Psoas muscle (tissue), 8 donors: ENCODE measurements at regions of chr9 and their contacts with region 1.

Region 1: GRCh38 chr9:130490981-130491380 is 46.2 kb downstream of the ASS1 start:
- DNase-seq: no peak
- ATAC-seq: no peak
- H3K4me3 ChIP-seq: no peak overlapping the region
- H3K27ac ChIP-seq: no peak overlapping the region
- H3K4me1 ChIP-seq: no peaks in the 10 kb centered on the region
- H3K27me3 ChIP-seq: peaks cover 0 to 1% (median 0%) of the 10 kb centered on the region in 3 donors
- CTCF ChIP-seq: no peak

Region 2: DNA sequence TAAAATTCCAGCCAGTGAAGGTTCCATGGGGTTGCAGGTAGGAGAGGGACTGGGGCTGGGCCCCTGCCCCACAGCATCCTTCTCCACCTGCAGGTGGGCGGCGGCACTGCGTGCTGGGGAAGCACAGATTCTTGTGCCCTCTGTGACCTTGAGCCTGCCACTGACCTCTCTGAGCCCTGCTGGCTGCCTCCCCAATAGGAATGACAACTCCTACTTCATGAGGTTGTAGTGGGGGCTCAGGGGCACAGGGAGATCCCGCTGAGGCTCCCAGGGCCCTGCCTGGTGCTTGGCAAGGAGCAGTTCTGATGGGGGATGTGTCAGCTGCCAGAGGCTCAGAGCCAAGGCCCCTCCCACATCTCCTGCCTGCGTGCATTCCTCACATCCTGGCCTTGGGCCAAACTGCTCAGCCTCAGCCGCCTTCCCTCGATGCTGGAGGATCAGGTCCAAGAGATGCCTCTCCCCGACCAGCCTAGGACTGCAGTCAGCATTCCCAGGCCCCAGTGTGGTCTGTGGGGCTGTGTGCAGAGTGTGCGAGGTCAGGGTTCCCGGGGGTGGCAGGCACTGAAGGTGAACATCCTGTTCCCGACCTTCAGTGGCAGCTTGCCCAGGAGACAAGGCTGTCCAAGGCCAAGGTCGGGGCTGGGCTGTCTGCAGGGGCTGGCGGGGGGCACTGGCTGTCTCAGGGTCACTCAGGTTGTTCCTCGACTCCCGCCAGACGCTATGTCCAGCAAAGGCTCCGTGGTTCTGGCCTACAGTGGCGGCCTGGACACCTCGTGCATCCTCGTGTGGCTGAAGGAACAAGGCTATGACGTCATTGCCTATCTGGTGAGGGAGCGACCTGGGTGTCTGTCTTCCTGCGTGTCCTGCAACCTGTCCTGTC is 39.2 kb before region 1 on chr9:
- intact Hi-C with region 1: no loop called
- DNase-seq: peak; percentile 83 to 87
- ATAC-seq: peak; percentile 38 to 68 (median 63)
- H3K4me3 ChIP-seq: no peak overlapping the region
- H3K27ac ChIP-seq: peak overlapping the region; percentile 16
- H3K4me1 ChIP-seq: peaks cover 25% of the 10 kb centered on the region
- H3K27me3 ChIP-seq: peaks cover 0 to 2% (median 0%) of the 10 kb centered on the region in 3 donors
- CTCF ChIP-seq: no peak

Region 3: GRCh38 chr9:130542457-130543228 is 51.7 kb after region 1 on chr9:
- intact Hi-C with region 1: loop called in 1 of 2 experiments (anchors 2 kb)
- DNase-seq: no peak
- ATAC-seq: no peak
- H3K4me3 ChIP-seq: no peak overlapping the region
- H3K27ac ChIP-seq: no peak overlapping the region
- H3K4me1 ChIP-seq: no peaks in the 10 kb centered on the region
- H3K27me3 ChIP-seq: peaks cover 0 to 36% (median 11%) of the 10 kb centered on the region in 3 donors
- CTCF ChIP-seq: no peak